ENCODE measurements at regions of chr14 and their contacts with region 1.

Region 1: DNA sequence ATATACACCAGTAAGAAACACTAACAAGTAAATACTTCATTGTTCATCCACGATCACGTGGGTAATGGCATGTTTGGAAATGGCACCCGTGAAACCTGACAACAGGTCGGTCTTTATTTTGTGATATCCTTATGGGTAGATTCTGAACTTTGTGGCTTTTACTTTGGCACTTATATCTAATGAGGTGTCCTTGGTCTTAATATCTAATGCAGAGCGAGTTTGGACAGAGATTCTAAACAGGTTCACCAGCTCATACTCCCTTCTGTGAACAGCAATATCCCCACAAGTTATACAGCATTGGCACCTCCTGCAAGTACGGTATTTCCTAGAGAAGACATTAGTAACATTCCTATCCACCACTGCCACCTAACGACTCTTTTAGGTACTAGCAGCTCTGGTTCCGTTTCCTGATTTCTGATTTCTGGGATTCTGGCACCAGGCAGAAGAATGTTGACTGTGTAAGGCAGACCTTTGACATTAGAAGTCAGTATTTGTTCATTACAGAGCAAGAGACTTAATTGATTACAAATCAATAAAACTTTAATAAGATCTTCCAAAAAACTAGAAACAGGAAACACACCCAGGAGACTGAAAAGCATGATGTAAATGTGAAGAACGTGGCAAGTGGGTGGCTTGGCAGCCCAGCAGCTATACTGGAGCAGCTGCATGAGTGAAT is 2.4 kb downstream of the ANG start:
- H3K4me3 Mint-ChIP-seq: no peak overlapping the region
- H3K27ac Mint-ChIP-seq: no peak overlapping the region
- H3K4me1 Mint-ChIP-seq: peaks cover 14% of the 10 kb centered on the region
- H3K27me3 Mint-ChIP-seq: no peaks in the 10 kb centered on the region

Region 2: GRCh38 chr14:20662968-20663732 is 27.8 kb before region 1 on chr14:
- intact Hi-C with region 1: loop called (anchors 2 kb)
- H3K4me3 Mint-ChIP-seq: peak overlapping the region; percentile 83
- H3K27ac Mint-ChIP-seq: peak overlapping the region; percentile 52
- H3K4me1 Mint-ChIP-seq: peaks cover 55% of the 10 kb centered on the region
- H3K27me3 Mint-ChIP-seq: peaks cover 36% of the 10 kb centered on the region

Region 3: GRCh38 chr14:20904393-20905029 is 213.5 kb after region 1 on chr14:
- intact Hi-C with region 1: no loop called
- H3K4me3 Mint-ChIP-seq: no peak overlapping the region
- H3K27ac Mint-ChIP-seq: no peak overlapping the region
- H3K4me1 Mint-ChIP-seq: peaks cover 29% of the 10 kb centered on the region
- H3K27me3 Mint-ChIP-seq: no peaks in the 10 kb centered on the region

Region 4: GRCh38 chr14:21220874-21221477 is 530.0 kb after region 1 on chr14:
- intact Hi-C with region 1: no loop called
- H3K4me3 Mint-ChIP-seq: no peak overlapping the region
- H3K27ac Mint-ChIP-seq: peak overlapping the region; percentile 20
- H3K4me1 Mint-ChIP-seq: peaks cover 21% of the 10 kb centered on the region
- H3K27me3 Mint-ChIP-seq: no peaks in the 10 kb centered on the region